Endothelial cell of umbilical vein (primary cell): ENCODE measurements at regions of chr11 and their contacts with region 1.

Region 1: GRCh38 chr11:46392421-46393230 is 1.1 kb upstream of the CHRM4 start:
- DNase-seq: peak; percentile 71
- H3K4me3 ChIP-seq: peak overlapping the region in 1 of 3 experiments; percentile 36
- H3K27ac ChIP-seq: no peak overlapping the region
- H3K4me1 ChIP-seq: peaks cover 3% of the 10 kb centered on the region
- H3K27me3 ChIP-seq: peaks cover 21 to 34% of the 10 kb centered on the region in 2 experiments
- CTCF ChIP-seq: no peak
- POLR2A ChIP-seq: no peak

Region 2: GRCh38 chr11:45993531-45994001 is 399.1 kb before region 1 on chr11:
- CTCF ChIA-PET with region 1: no interaction called
- POLR2A ChIA-PET with region 1: no interaction called
- dilution Hi-C with region 1: no loop called
- intact Hi-C with region 1: no loop called
- DNase-seq: no peak
- H3K4me3 ChIP-seq: no peak overlapping the region
- H3K27ac ChIP-seq: no peak overlapping the region
- H3K4me1 ChIP-seq: no peaks in the 10 kb centered on the region
- H3K27me3 ChIP-seq: no peaks in the 10 kb centered on the region
- CTCF ChIP-seq: no peak
- POLR2A ChIP-seq: no peak

Region 3: GRCh38 chr11:46404476-46405017 is 11.9 kb after region 1 on chr11:
- CTCF ChIA-PET with region 1: interaction called, 22 read pairs
- POLR2A ChIA-PET with region 1: no interaction called
- dilution Hi-C with region 1: no loop called
- intact Hi-C with region 1: no loop called
- DNase-seq: no peak
- H3K4me3 ChIP-seq: no peak overlapping the region
- H3K27ac ChIP-seq: no peak overlapping the region
- H3K4me1 ChIP-seq: no peaks in the 10 kb centered on the region
- H3K27me3 ChIP-seq: no peaks in the 10 kb centered on the region
- CTCF ChIP-seq: no peak
- POLR2A ChIP-seq: no peak

Region 4: GRCh38 chr11:46521961-46522681 is 129.5 kb after region 1 on chr11:
- CTCF ChIA-PET with region 1: interaction called, 10 read pairs
- POLR2A ChIA-PET with region 1: no interaction called
- dilution Hi-C with region 1: no loop called
- intact Hi-C with region 1: no loop called
- DNase-seq: no peak
- H3K4me3 ChIP-seq: no peak overlapping the region
- H3K27ac ChIP-seq: no peak overlapping the region
- H3K4me1 ChIP-seq: peaks cover 15% of the 10 kb centered on the region
- H3K27me3 ChIP-seq: no peaks in the 10 kb centered on the region
- CTCF ChIP-seq: peak in 1 of 2 donors; percentile 18
- POLR2A ChIP-seq: no peak

Region 5: GRCh38 chr11:46616998-46617675 is 224.5 kb after region 1 on chr11 and contains the starts of genes ATG13 and HARBI1:
- CTCF ChIA-PET with region 1: interaction called, 14 read pairs
- POLR2A ChIA-PET with region 1: no interaction called
- dilution Hi-C with region 1: no loop called
- intact Hi-C with region 1: loop called (anchors 2 kb)
- DNase-seq: peak; percentile 89
- H3K4me3 ChIP-seq: peak within 1 kb of the TSS; percentile 64 to 97 (median 86)
- H3K27ac ChIP-seq: peak within 1 kb of the TSS; percentile 96
- H3K4me1 ChIP-seq: peaks cover 19% of the 10 kb centered on the region
- H3K27me3 ChIP-seq: no peaks in the 10 kb centered on the region
- CTCF ChIP-seq: no peak
- POLR2A ChIP-seq: peak; percentile 93
- total RNA-seq, gene ATG13: 66.5 and 67.3 TPM in 2 replicates
- total RNA-seq, gene HARBI1: 3.2 and 4.7 TPM in 2 replicates

Region 6: GRCh38 chr11:46718155-46719019 is 325.8 kb after region 1 on chr11:
- CTCF ChIA-PET with region 1: no interaction called
- POLR2A ChIA-PET with region 1: no interaction called
- dilution Hi-C with region 1: no loop called
- intact Hi-C with region 1: no loop called
- DNase-seq: no peak
- H3K4me3 ChIP-seq: no peak overlapping the region
- H3K27ac ChIP-seq: no peak overlapping the region
- H3K4me1 ChIP-seq: peaks cover 6% of the 10 kb centered on the region
- H3K27me3 ChIP-seq: no peaks in the 10 kb centered on the region
- CTCF ChIP-seq: no peak
- POLR2A ChIP-seq: no peak